Caco-2 (cell line): ENCODE measurements at regions of chr1 and their contacts with region 1.

Region 1: DNA sequence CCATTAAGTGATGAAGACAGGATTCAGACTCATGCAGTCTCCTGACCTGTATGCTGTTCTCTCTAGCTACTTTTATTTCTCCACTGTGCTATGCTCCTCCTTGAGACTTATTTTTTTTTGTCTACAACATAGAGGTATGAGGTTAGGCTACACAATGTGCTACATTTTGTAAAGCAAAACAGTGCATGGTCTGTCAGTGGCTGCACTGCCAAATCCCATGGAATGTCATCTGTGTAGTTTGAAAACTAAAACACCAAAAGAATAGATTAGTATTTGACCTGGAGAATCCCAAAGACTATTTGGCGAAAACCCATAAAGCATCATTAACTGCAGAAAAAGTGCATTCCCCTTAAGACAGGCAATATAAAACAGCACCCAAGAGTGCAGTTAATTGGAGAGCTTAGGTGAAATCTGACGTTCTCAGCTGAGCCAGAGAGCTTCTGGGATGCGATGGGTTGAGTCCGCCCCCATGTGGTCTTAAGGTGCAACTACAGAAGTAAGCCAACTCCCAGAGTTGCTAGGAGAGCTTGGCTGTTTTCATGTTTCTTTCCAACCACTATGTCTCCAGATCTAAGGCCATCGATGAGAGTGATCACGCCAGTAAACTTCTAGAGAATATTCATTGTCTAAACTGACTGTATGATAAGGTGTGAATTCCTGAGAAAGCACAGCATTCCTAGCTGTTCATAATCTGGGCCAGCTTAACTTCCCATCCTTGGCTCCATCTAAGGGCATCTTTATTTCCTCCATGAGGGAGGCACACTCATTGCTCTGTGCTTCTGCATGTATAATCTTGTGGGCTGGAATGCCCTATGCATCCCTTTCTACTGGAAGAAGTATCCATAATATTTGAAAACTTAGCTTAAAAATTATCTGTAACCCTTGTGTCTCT is 20.7 kb upstream of the CYP2J2 start:
- DNase-seq: peak in 1 of 2 experiments; percentile 57
- H3K4me3 ChIP-seq: no peak overlapping the region
- H3K4me3 Mint-ChIP-seq: no peak overlapping the region
- H3K27ac Mint-ChIP-seq: no peak overlapping the region
- H3K4me1 ChIP-seq: no peaks in the 10 kb centered on the region
- H3K4me1 Mint-ChIP-seq: no peaks in the 10 kb centered on the region
- H3K27me3 ChIP-seq: no peaks in the 10 kb centered on the region
- H3K27me3 Mint-ChIP-seq: peaks cover 8% of the 10 kb centered on the region
- CTCF ChIP-seq: peak; percentile 74 to 77

Region 2: GRCh38 chr1:59779949-59780348 is 167.3 kb before region 1 on chr1:
- CTCF ChIA-PET with region 1: no interaction called
- POLR2A ChIA-PET with region 1: no interaction called
- intact Hi-C with region 1: loop called (anchors 10 kb)
- DNase-seq: peak in 1 of 2 experiments; percentile 11
- H3K4me3 ChIP-seq: no peak overlapping the region
- H3K4me3 Mint-ChIP-seq: no peak overlapping the region
- H3K27ac Mint-ChIP-seq: no peak overlapping the region
- H3K4me1 ChIP-seq: no peaks in the 10 kb centered on the region
- H3K4me1 Mint-ChIP-seq: no peaks in the 10 kb centered on the region
- H3K27me3 ChIP-seq: no peaks in the 10 kb centered on the region
- H3K27me3 Mint-ChIP-seq: no peaks in the 10 kb centered on the region
- CTCF ChIP-seq: peak; percentile 30 to 41

Region 3: GRCh38 chr1:59879574-59879973 is 67.7 kb before region 1 on chr1:
- CTCF ChIA-PET with region 1: interaction called, 44 read pairs
- POLR2A ChIA-PET with region 1: interaction called, 3 read pairs
- intact Hi-C with region 1: loop called (anchors 1 kb)
- DNase-seq: peak; percentile 67 to 70
- H3K4me3 ChIP-seq: no peak overlapping the region
- H3K4me3 Mint-ChIP-seq: no peak overlapping the region
- H3K27ac Mint-ChIP-seq: no peak overlapping the region
- H3K4me1 ChIP-seq: no peaks in the 10 kb centered on the region
- H3K4me1 Mint-ChIP-seq: no peaks in the 10 kb centered on the region
- H3K27me3 ChIP-seq: no peaks in the 10 kb centered on the region
- H3K27me3 Mint-ChIP-seq: no peaks in the 10 kb centered on the region
- CTCF ChIP-seq: peak; percentile 39 to 41

Region 4: GRCh38 chr1:59903141-59903754 is 44.0 kb before region 1 on chr1:
- CTCF ChIA-PET with region 1: interaction called, 10 read pairs
- POLR2A ChIA-PET with region 1: no interaction called
- intact Hi-C with region 1: loop called (anchors 1 kb)
- DNase-seq: peak in 1 of 2 experiments; percentile 32
- H3K4me3 ChIP-seq: no peak overlapping the region
- H3K4me3 Mint-ChIP-seq: no peak overlapping the region
- H3K27ac Mint-ChIP-seq: no peak overlapping the region
- H3K4me1 ChIP-seq: peaks cover 5% of the 10 kb centered on the region; the same call in 1 of the 2 replicates
- H3K4me1 Mint-ChIP-seq: peaks cover 7% of the 10 kb centered on the region
- H3K27me3 ChIP-seq: no peaks in the 10 kb centered on the region
- H3K27me3 Mint-ChIP-seq: peaks cover 2% of the 10 kb centered on the region
- CTCF ChIP-seq: peak; percentile 46 to 53